Caco-2 (cell line): ENCODE measurements at regions of chr6 and their contacts with region 1.

Region 1: DNA sequence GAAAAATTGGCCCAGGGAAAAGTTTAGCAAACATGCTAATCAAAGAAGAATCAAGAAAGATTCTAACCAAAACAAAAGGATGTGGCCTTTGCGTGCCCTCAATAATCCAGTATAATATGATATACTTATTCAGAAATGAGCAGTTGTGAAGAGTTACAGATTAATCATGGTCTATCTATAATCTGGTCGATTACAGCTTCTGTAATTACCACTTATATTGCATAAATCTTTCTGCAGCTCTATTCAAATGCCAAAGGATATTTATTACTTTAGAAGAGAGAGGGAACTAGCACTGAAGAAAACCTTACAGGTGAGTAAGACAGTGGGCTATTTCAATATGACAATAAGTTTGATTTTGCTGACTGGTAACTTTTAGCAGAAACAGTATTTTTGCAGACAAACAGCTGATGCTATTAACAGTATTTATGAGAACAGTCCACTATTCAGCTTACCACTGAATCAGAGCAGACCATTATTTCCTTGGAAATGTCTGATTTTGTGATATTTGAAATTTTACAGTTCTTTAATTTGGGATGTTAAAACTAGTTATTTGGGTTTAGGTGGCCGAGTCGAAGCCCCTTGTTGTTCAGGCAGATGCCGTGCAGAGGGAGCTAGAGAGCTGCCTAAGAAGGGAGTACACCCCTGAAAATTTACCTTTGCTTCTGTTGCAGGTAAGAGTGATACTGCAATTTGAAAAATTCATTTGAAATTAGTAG is 92.2 kb downstream of the CEP57L1 start:
- DNase-seq: peak in 1 of 2 experiments; percentile 63
- H3K4me3 ChIP-seq: no peak overlapping the region
- H3K4me3 Mint-ChIP-seq: no peak overlapping the region
- H3K27ac Mint-ChIP-seq: no peak overlapping the region
- H3K4me1 ChIP-seq: no peaks in the 10 kb centered on the region
- H3K4me1 Mint-ChIP-seq: peaks cover 2% of the 10 kb centered on the region
- H3K27me3 ChIP-seq: no peaks in the 10 kb centered on the region
- H3K27me3 Mint-ChIP-seq: peaks cover 3% of the 10 kb centered on the region
- CTCF ChIP-seq: peak; percentile 90 to 97

Region 2: GRCh38 chr6:109292420-109292819 is 104.9 kb after region 1 on chr6:
- CTCF ChIA-PET with region 1: no interaction called
- POLR2A ChIA-PET with region 1: no interaction called
- intact Hi-C with region 1: loop called (anchors 5 kb)
- DNase-seq: no peak
- H3K4me3 ChIP-seq: no peak overlapping the region
- H3K4me3 Mint-ChIP-seq: no peak overlapping the region
- H3K27ac Mint-ChIP-seq: no peak overlapping the region
- H3K4me1 ChIP-seq: no peaks in the 10 kb centered on the region
- H3K4me1 Mint-ChIP-seq: peaks cover 19% of the 10 kb centered on the region
- H3K27me3 ChIP-seq: no peaks in the 10 kb centered on the region
- H3K27me3 Mint-ChIP-seq: no peaks in the 10 kb centered on the region
- CTCF ChIP-seq: no peak

Region 3: DNA sequence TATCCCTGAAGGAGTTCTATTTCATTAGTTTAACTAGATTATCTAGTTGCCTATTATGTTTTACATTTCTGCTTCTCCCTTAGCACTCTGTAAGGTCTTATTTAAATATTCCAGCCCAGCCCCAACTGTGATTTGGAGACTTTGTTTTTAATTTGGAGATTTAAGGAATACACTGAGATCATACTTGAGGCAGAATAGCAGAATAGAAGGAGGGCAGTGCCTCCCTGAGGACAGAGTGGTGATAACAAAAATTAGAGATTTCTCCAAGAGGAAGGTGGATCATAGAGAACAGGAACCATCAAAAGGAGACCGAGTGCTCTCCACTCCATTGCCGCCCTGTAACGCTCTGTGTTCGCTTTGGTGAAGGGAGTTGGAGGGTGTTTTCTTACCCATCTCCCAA is 209.5 kb after region 1 on chr6:
- CTCF ChIA-PET with region 1: interaction called, 6 read pairs
- POLR2A ChIA-PET with region 1: no interaction called
- intact Hi-C with region 1: loop called (anchors 1 kb)
- DNase-seq: peak in 1 of 2 experiments; percentile 21
- H3K4me3 ChIP-seq: no peak overlapping the region
- H3K4me3 Mint-ChIP-seq: no peak overlapping the region
- H3K27ac Mint-ChIP-seq: no peak overlapping the region
- H3K4me1 ChIP-seq: no peaks in the 10 kb centered on the region
- H3K4me1 Mint-ChIP-seq: no peaks in the 10 kb centered on the region
- H3K27me3 ChIP-seq: no peaks in the 10 kb centered on the region
- H3K27me3 Mint-ChIP-seq: peaks cover 6% of the 10 kb centered on the region
- CTCF ChIP-seq: peak; percentile 28 to 42